ENCODE measurements at regions of chr9 and their contacts with region 1.

Region 1: DNA sequence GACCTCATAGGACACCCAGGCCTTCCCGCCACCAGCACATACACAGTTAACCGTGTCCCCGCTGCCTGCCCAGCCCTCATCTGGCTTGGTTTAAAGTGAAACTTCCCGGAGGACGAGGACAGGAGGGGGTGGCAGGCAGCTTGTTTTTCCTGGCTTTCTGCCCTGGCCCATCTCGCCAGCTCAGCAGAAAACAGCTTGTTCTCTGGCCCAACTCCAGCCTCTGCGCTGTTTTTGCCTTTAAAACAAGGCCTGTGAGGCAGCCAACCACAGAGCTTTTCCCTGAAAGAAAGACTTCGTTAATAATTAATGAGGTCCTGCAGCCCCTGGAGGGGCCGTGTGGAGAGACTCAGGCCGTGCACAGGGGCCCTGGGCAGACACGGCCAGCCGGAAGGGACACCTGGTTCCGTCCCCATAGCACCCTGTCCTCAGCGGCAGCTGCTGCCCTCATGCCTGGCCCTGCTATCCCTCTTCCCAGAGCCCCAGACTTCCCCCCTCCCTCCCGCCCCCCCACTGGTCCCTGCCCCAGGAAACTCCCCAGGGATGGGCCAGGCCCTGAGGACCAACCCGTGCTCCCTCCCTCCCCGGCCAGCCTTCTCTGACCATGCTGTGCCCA is 108.7 kb downstream of the RXRA start:
- DNase-seq: peak; percentile 65 to 88
- ATAC-seq: peak; percentile 57 to 76
- H3K4me3 ChIP-seq: no peak overlapping the region
- H3K27ac ChIP-seq: peak overlapping the region; percentile 80 to 88
- H3K4me1 ChIP-seq: peaks cover 46% of the 10 kb centered on the region
- CTCF ChIP-seq: no peak
- EP300 ChIP-seq: no peak
- POLR2A ChIP-seq: no peak
- RAD21 ChIP-seq: peak in 1 of 2 experiments; percentile 35; a peak in 3 of 5 replicates

Region 2: GRCh38 chr9:134067904-134068743 is 366.9 kb before region 1 on chr9 and contains the start of gene BRD3:
- CTCF ChIA-PET with region 1: no interaction called
- POLR2A ChIA-PET with region 1: interaction called, 14 read pairs
- DNase-seq: peak; percentile 84 to 88
- ATAC-seq: peak; percentile 86 to 88
- H3K4me3 ChIP-seq: peak within 1 kb of the TSS; percentile 83
- H3K27ac ChIP-seq: peak within 1 kb of the TSS; percentile 91 to 100
- H3K4me1 ChIP-seq: peaks cover 10% of the 10 kb centered on the region
- CTCF ChIP-seq: no peak
- EP300 ChIP-seq: no peak
- POLR2A ChIP-seq: peak; percentile 70
- RAD21 ChIP-seq: no peak
- polyA plus RNA-seq, gene BRD3: 8.9 and 9.0 TPM in 2 replicates

Region 3: DNA sequence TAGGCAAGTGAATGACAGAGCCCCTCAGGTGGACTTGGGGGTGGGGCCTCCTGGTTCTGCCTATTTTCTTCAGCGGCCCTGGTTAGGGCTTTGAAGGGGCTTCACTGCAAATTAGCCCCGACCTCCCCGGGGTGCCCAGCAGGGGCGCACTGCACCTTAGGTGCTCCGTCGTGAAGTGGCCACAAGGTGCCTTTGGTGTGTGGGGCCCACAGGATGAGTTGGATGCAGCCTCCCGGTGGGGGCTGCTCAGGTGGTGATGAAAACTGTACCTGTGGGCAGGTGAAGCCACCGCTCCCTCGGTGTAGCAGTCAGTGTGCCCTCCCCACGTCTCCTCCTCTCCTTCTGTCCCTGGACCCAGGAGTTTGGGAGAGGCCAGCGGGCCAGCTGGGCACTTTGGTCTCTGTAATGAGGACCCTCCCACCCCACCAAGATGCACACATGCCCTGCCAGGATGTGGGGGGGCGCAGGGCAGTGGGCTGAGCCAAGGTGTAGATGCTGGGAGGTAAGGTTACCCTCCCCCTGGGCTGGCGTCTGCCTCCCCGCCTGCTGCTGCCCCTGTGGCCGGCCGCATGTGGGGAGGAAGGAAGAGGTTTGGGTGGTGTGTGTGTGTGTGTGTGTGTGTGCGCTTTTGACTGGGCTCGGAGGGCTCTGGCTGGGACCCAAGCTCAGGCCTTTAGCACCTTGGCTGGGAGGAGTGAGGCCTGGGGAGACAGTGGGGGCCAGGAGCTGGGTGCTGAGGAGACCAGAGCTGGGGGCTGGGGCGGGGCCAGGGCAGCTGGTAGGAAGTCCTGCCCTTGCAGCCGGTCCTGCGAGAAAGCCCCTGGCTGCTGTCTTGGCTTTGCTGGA is 53.1 kb before region 1 on chr9:
- CTCF ChIA-PET with region 1: no interaction called
- POLR2A ChIA-PET with region 1: no interaction called
- DNase-seq: no peak
- ATAC-seq: peak in 1 of 2 experiments; percentile 10; a peak in 1 of 6 replicates
- H3K4me3 ChIP-seq: no peak overlapping the region
- H3K27ac ChIP-seq: peak overlapping the region; percentile 93 to 97
- H3K4me1 ChIP-seq: peaks cover 95% of the 10 kb centered on the region
- CTCF ChIP-seq: peak; percentile 25
- EP300 ChIP-seq: no peak
- POLR2A ChIP-seq: no peak
- RAD21 ChIP-seq: no peak

Region 4: GRCh38 chr9:134407123-134407808 is 27.7 kb before region 1 on chr9:
- CTCF ChIA-PET with region 1: interaction called, 8 read pairs
- POLR2A ChIA-PET with region 1: interaction called, 12 read pairs
- DNase-seq: peak; percentile 96 to 98
- ATAC-seq: peak; percentile 76 to 87
- H3K4me3 ChIP-seq: peak overlapping the region; percentile 33
- H3K27ac ChIP-seq: peak overlapping the region; percentile 99 to 100
- H3K4me1 ChIP-seq: peaks cover 86% of the 10 kb centered on the region
- CTCF ChIP-seq: no peak
- EP300 ChIP-seq: peak in 1 of 2 experiments; percentile 60; a peak in 3 of 5 replicates
- POLR2A ChIP-seq: peak; percentile 70
- RAD21 ChIP-seq: peak in 1 of 2 experiments; percentile 14; a peak in 2 of 5 replicates

Region 5: DNA sequence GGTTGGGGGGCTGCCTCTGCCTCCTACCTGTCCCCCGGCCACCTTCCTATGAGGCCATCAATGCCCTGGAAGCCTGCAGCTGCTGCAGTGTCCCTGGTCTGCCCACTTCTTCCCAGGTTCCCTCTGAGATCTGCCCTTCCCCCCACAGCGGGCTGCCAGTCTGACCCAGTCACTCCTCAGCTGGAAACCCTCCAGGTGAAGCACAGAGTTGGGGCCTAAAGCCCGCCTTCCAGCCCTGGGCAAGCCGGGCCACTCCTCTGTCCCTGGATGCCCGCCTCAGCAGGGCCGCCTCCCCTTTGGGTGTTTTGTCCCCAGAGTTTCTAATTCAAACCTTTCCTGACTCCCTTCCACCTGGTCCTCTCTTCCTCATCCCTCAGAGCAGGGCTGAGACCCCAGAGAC is 28.3 kb after region 1 on chr9:
- CTCF ChIA-PET with region 1: no interaction called
- POLR2A ChIA-PET with region 1: no interaction called
- DNase-seq: no peak
- ATAC-seq: peak in 1 of 2 experiments; percentile 25; a peak in 2 of 6 replicates
- H3K4me3 ChIP-seq: no peak overlapping the region
- H3K27ac ChIP-seq: peak overlapping the region in 1 of 2 experiments; percentile 63; a peak in 2 of 6 replicates
- H3K4me1 ChIP-seq: peaks cover 22% of the 10 kb centered on the region
- CTCF ChIP-seq: no peak
- EP300 ChIP-seq: no peak
- POLR2A ChIP-seq: no peak
- RAD21 ChIP-seq: no peak

Region 6: GRCh38 chr9:134475011-134475790 is 40.2 kb after region 1 on chr9:
- CTCF ChIA-PET with region 1: no interaction called
- POLR2A ChIA-PET with region 1: no interaction called
- DNase-seq: peak in 1 of 2 experiments; percentile 30
- ATAC-seq: peak; percentile 3 to 34; a peak in 3 of 6 replicates
- H3K4me3 ChIP-seq: no peak overlapping the region
- H3K27ac ChIP-seq: peak overlapping the region in 1 of 2 experiments; percentile 55; a peak in 1 of 6 replicates
- H3K4me1 ChIP-seq: no peaks in the 10 kb centered on the region
- CTCF ChIP-seq: no peak
- EP300 ChIP-seq: no peak
- POLR2A ChIP-seq: no peak
- RAD21 ChIP-seq: no peak

Region 7: GRCh38 chr9:134502809-134503211 is 67.8 kb after region 1 on chr9:
- CTCF ChIA-PET with region 1: no interaction called
- POLR2A ChIA-PET with region 1: no interaction called
- DNase-seq: peak; percentile 87 to 98
- ATAC-seq: peak; percentile 100
- H3K4me3 ChIP-seq: no peak overlapping the region
- H3K27ac ChIP-seq: peak overlapping the region; percentile 92 to 93
- H3K4me1 ChIP-seq: peaks cover 19% of the 10 kb centered on the region
- CTCF ChIP-seq: no peak
- EP300 ChIP-seq: peak in 1 of 2 experiments; percentile 20; a peak in 1 of 5 replicates
- POLR2A ChIP-seq: peak; percentile 24; the same call in 1 of the 2 replicates
- RAD21 ChIP-seq: peak in 1 of 2 experiments; percentile 32; a peak in 2 of 5 replicates

Measured in A549 (cell line).